ENCODE measurements at regions of chr1 and their contacts with region 1.

Region 1: DNA sequence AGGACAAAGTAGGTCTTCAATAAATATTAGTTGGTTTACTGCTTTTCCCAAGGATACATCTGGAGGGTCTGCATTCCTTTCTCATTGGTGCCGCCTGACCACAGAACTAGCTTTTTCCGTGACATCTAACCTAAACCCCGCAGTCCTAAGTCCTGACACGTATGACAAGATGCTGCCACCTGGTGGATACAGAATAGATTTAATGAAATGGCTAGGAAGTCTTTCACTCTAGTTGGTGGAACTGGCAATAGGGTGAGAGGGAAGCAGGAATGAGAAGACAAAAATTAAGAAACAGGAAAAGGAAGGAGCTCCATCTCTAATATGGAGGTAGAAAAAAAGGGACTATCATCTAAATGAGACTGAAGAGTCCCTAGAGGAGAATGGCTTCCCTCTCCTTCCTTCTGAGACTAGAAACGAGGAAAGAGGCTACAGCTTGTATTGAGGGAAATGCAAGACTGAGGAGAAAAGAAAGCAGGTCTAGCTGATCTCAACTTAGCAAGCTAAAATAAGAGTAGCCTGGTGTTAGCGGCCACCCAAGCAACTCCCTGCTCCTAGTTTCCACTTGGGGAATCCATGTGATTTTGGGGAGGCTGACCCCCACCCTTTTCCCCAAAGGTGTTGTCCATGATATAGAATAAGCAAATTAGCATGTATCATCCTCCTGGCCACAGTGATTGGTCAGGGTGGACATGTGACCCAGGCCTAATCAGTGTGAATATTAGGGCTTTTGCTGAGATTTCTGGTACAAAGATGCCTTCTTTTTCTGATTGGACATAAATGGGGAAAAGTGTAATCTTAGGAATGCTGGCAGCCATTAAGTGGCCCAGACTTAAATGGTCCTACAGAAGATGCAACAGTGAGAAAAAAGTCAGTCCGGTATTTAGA is 5.9 kb downstream of the RFX5 start:
- DNase-seq: peak; percentile 72
- H3K4me3 Mint-ChIP-seq: no peak overlapping the region
- H3K27ac Mint-ChIP-seq: peak overlapping the region; percentile 3
- H3K4me1 Mint-ChIP-seq: peaks cover 3% of the 10 kb centered on the region
- H3K27me3 Mint-ChIP-seq: no peaks in the 10 kb centered on the region
- CTCF ChIP-seq: peak; percentile 46

Region 2: DNA sequence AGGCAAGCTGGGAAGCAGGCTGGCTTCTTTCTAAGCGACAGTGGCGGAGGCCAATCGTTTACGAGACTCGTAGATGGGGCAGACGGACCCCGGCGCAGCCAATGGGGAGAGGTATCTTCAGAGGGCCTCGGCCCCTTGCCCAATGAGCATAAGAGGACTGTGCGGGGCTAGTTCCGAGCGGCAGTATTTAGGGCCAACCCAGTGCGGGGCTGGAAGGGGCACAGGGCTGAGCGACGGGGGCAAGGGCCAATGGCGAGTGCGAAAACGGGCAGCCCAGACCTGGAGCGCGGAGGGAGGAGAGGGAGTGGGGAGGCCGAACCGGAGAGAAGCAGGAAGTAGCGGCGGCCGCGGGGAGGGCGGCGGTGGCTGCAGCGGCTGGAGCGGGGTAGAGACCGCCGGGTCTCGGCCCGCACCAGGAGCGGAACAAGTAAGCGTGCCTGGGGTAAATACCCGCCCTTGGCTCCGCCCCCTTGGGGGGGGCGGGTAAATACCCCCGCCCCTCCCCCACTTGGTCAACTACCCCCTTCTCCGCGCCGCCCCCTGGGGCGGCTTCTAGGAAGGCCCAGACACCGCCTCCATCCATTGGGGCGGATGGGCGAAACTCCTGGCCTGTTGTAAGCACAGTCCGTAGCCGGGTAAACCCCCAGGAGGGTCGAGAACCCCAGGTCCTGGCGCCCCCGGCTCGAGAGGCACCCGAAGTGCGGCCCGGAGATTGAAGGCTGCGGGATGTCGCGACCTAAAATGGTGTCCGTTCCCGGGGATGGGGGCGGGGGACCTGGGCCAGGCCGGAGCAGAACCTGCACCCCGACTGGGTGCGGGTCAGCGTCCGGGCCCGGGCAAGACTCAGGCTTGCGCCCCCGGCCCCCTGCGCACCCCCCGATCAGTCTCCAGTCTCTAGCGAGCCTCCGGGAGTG is 58.9 kb before region 1 on chr1 and contains the start of gene ZNF687:
- CTCF ChIA-PET with region 1: interaction called, 10 read pairs
- intact Hi-C with region 1: no loop called
- DNase-seq: peak; percentile 100
- H3K4me3 Mint-ChIP-seq: peak within 1 kb of the TSS; percentile 85
- H3K27ac Mint-ChIP-seq: peak within 1 kb of the TSS; percentile 99
- H3K4me1 Mint-ChIP-seq: peaks cover 13% of the 10 kb centered on the region
- H3K27me3 Mint-ChIP-seq: peaks cover 9% of the 10 kb centered on the region
- CTCF ChIP-seq: no peak
- total RNA-seq, gene ZNF687: 42.9 and 43.4 TPM in 2 replicates

Region 3: GRCh38 chr1:151327223-151327902 is 13.7 kb before region 1 on chr1 and contains the start of gene PI4KB:
- CTCF ChIA-PET with region 1: interaction called, 22 read pairs
- intact Hi-C with region 1: no loop called
- DNase-seq: peak; percentile 96
- H3K4me3 Mint-ChIP-seq: peak within 1 kb of the TSS; percentile 90
- H3K27ac Mint-ChIP-seq: peak within 1 kb of the TSS; percentile 92
- H3K4me1 Mint-ChIP-seq: peaks cover 14% of the 10 kb centered on the region
- H3K27me3 Mint-ChIP-seq: no peaks in the 10 kb centered on the region
- CTCF ChIP-seq: no peak
- total RNA-seq, gene PI4KB: 50.7 and 57.6 TPM in 2 replicates

Region 4: DNA sequence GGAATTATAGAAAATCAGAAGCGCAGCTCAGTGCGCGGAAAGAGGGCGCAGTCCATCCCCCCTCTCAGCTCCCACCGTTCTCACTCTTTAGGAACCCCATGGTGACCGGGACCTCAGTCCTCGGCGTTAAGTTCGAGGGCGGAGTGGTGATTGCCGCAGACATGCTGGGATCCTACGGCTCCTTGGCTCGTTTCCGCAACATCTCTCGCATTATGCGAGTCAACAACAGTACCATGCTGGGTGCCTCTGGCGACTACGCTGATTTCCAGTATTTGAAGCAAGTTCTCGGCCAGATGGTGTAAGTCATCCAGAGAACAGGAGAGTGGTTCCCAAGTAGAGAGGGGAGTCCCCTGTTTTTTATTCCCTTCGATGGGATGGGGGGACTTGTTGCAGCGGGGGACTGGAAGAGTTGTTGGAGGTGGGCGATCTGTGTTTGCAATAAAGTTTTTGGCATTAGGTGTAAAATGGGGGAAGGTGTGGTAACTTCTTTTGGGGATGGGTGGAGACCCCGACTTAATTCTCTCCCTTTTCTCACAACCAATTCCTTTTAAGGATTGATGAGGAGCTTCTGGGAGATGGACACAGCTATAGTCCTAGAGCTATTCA is 58.9 kb after region 1 on chr1:
- CTCF ChIA-PET with region 1: interaction called, 7 read pairs
- intact Hi-C with region 1: loop called (anchors 5 kb)
- DNase-seq: no peak
- H3K4me3 Mint-ChIP-seq: peak overlapping the region; percentile 99
- H3K27ac Mint-ChIP-seq: peak overlapping the region; percentile 99
- H3K4me1 Mint-ChIP-seq: peaks cover 33% of the 10 kb centered on the region
- H3K27me3 Mint-ChIP-seq: no peaks in the 10 kb centered on the region
- CTCF ChIP-seq: no peak

Measured in Calu3 (cell line).